ENCODE measurements at regions of chr5 and their contacts with region 1.

Region 1: GRCh38 chr5:36728697-36729543 is 122.5 kb downstream of the SLC1A3 start:
- DNase-seq: peak; percentile 39
- ATAC-seq: peak; percentile 59
- H3K4me3 Mint-ChIP-seq: no peak overlapping the region
- H3K27ac Mint-ChIP-seq: no peak overlapping the region
- H3K4me1 Mint-ChIP-seq: peaks cover 14% of the 10 kb centered on the region
- H3K27me3 Mint-ChIP-seq: peaks cover 7% of the 10 kb centered on the region
- CTCF ChIP-seq: peak; percentile 66

Region 2: GRCh38 chr5:36690041-36690961 is 38.6 kb before region 1 on chr5:
- CTCF ChIA-PET with region 1: interaction called, 12 read pairs
- POLR2A ChIA-PET with region 1: no interaction called
- intact Hi-C with region 1: no loop called
- DNase-seq: peak; percentile 79
- ATAC-seq: peak; percentile 86
- H3K4me3 Mint-ChIP-seq: peak overlapping the region; percentile 76
- H3K27ac Mint-ChIP-seq: peak overlapping the region; percentile 47
- H3K4me1 Mint-ChIP-seq: peaks cover 11% of the 10 kb centered on the region
- H3K27me3 Mint-ChIP-seq: peaks cover 23% of the 10 kb centered on the region
- CTCF ChIP-seq: peak; percentile 81

Region 3: DNA sequence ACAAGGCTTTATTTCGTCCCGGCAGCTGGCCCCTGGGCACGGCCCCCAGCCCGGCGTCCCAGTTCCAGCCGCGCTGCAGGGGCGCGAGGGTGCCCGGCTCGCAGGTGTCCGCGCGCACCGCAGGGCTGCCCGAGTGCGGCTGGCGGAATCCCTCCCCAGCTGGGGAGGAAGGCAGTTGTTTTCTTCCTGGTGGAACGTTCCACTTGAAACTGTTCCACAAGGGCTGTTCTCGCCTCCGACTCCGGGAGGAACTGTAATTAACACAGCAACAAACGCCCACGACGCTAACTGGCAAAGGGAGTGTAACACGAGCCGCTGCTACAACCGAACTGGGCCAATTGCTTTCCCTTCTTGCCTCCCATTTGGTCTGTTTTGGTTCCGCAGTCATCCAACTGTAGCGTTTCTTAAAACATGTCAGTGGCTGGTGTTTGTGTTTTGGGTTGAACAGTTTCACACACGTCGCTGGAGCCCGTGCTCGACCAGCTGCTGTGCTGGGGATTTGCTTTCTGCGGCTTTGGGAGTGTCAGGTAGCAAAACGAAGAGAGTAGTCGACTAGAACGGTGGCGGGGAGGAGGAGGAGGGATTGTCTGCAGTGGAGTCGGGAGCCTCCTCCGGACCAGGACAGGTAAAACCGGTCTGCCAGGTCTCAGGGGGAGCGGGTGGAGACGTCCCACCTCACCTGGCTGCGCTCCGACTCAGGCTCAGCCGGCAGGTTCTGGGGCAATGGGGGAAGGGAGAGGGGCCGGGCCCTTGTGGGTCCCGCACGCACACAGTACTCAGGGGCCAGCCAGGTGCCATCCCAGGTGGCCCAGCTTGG is 16.1 kb after region 1 on chr5:
- CTCF ChIA-PET with region 1: interaction called, 34 read pairs
- POLR2A ChIA-PET with region 1: no interaction called
- intact Hi-C with region 1: no loop called
- DNase-seq: peak; percentile 41
- ATAC-seq: peak; percentile 62
- H3K4me3 Mint-ChIP-seq: peak overlapping the region; percentile 71
- H3K27ac Mint-ChIP-seq: no peak overlapping the region
- H3K4me1 Mint-ChIP-seq: peaks cover 12% of the 10 kb centered on the region
- H3K27me3 Mint-ChIP-seq: peaks cover 47% of the 10 kb centered on the region
- CTCF ChIP-seq: no peak

Region 4: DNA sequence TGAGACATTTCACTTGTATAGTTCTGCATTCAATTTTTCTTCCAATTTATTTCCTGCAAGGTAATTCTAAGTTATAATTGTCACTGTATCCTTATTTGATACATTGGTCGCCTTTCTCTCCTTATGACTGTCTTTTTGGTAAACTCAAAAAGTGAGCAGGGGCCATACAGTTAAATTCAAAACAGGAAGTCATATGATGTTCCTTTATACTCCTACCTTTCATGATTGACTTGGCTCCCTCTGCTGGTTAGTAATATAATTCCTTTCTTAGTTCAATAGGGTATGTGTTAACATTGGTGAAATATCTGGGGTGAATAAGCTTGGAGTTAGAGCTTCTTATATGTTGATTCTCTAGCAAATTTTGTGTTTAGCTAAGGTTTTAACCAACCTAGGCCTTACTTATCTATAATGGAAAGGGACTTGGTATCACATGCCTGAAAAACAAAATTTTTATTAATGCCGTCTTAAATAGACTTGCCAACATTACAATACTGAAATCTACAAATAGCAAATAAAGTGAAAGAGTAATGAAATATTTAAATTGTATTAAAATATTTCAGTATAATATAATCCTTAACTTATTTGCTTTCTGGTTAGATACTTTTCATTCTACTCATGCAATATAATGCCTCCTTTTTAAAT is 141.6 kb after region 1 on chr5:
- CTCF ChIA-PET with region 1: interaction called, 15 read pairs
- POLR2A ChIA-PET with region 1: no interaction called
- intact Hi-C with region 1: no loop called
- DNase-seq: no peak
- ATAC-seq: peak; percentile 85
- H3K4me3 Mint-ChIP-seq: no peak overlapping the region
- H3K27ac Mint-ChIP-seq: peak overlapping the region; percentile 76
- H3K4me1 Mint-ChIP-seq: peaks cover 36% of the 10 kb centered on the region
- H3K27me3 Mint-ChIP-seq: no peaks in the 10 kb centered on the region
- CTCF ChIP-seq: peak; percentile 70

Region 5: GRCh38 chr5:37005946-37006540 is 277.1 kb after region 1 on chr5:
- CTCF ChIA-PET with region 1: interaction called, 10 read pairs
- POLR2A ChIA-PET with region 1: no interaction called
- intact Hi-C with region 1: no loop called
- DNase-seq: no peak
- ATAC-seq: peak; percentile 45
- H3K4me3 Mint-ChIP-seq: no peak overlapping the region
- H3K27ac Mint-ChIP-seq: no peak overlapping the region
- H3K4me1 Mint-ChIP-seq: no peaks in the 10 kb centered on the region
- H3K27me3 Mint-ChIP-seq: no peaks in the 10 kb centered on the region
- CTCF ChIP-seq: peak; percentile 67

Measured in activated CD8-positive, alpha-beta T cell treated with anti-CD3 and anti-CD28 coated beads for 36 hours (primary cell).